ENCODE measurements at regions of chr19 and their contacts with region 1.

Region 1: GRCh38 chr19:2578901-2579677 is 103.2 kb downstream of the GADD45B start:
- DNase-seq: peak; percentile 97
- H3K4me3 ChIP-seq: peak overlapping the region; percentile 23 to 46 (median 26)
- H3K27ac ChIP-seq: peak overlapping the region; percentile 93
- H3K4me1 ChIP-seq: peaks cover 22% of the 10 kb centered on the region
- H3K27me3 ChIP-seq: no peaks in the 10 kb centered on the region
- CTCF ChIP-seq: peak; percentile 93 to 97
- POLR2A ChIP-seq: no peak

Region 2: GRCh38 chr19:2113439-2114211 is 465.5 kb before region 1 on chr19:
- CTCF ChIA-PET with region 1: no interaction called
- POLR2A ChIA-PET with region 1: no interaction called
- dilution Hi-C with region 1: no loop called
- intact Hi-C with region 1: no loop called
- DNase-seq: no peak
- H3K4me3 ChIP-seq: no peak overlapping the region
- H3K27ac ChIP-seq: no peak overlapping the region
- H3K4me1 ChIP-seq: no peaks in the 10 kb centered on the region
- H3K27me3 ChIP-seq: no peaks in the 10 kb centered on the region
- CTCF ChIP-seq: no peak
- POLR2A ChIP-seq: no peak

Region 3: GRCh38 chr19:2494444-2495129 is 84.5 kb before region 1 on chr19:
- CTCF ChIA-PET with region 1: interaction called, 5 read pairs
- POLR2A ChIA-PET with region 1: no interaction called
- dilution Hi-C with region 1: no loop called
- intact Hi-C with region 1: loop called (anchors 1 kb)
- DNase-seq: peak; percentile 57
- H3K4me3 ChIP-seq: peak overlapping the region; percentile 41 to 60 (median 50)
- H3K27ac ChIP-seq: peak overlapping the region; percentile 88
- H3K4me1 ChIP-seq: peaks cover 22% of the 10 kb centered on the region
- H3K27me3 ChIP-seq: no peaks in the 10 kb centered on the region
- CTCF ChIP-seq: no peak
- POLR2A ChIP-seq: no peak

Region 4: DNA sequence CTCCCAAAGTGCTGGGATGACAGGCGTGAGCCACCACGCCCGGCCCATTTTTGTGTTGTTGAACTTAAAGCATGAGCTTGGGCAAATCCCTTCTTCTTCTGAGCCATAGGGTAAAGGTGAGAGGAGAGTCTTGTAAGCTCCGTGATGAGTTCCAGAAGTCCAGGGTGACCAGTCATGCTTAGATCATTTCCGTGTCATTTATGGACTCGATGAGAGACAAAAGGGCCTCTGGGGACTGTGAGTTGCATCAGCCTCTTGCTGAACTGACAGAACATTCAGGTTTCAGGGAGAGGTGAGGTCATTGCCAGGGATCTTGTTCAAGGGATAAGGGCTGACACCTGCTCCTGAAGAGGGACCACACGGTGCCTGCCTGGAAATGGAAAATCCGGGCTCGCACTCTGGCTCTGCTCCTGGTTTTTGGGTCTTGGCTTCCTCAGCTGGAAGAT is 49.6 kb before region 1 on chr19:
- CTCF ChIA-PET with region 1: interaction called, 15 read pairs
- POLR2A ChIA-PET with region 1: interaction called, 4 read pairs
- dilution Hi-C with region 1: no loop called
- intact Hi-C with region 1: loop called (anchors 1 kb)
- DNase-seq: peak; percentile 75
- H3K4me3 ChIP-seq: no peak overlapping the region
- H3K27ac ChIP-seq: peak overlapping the region; percentile 75
- H3K4me1 ChIP-seq: peaks cover 36% of the 10 kb centered on the region
- H3K27me3 ChIP-seq: no peaks in the 10 kb centered on the region
- CTCF ChIP-seq: no peak
- POLR2A ChIP-seq: no peak

Region 5: DNA sequence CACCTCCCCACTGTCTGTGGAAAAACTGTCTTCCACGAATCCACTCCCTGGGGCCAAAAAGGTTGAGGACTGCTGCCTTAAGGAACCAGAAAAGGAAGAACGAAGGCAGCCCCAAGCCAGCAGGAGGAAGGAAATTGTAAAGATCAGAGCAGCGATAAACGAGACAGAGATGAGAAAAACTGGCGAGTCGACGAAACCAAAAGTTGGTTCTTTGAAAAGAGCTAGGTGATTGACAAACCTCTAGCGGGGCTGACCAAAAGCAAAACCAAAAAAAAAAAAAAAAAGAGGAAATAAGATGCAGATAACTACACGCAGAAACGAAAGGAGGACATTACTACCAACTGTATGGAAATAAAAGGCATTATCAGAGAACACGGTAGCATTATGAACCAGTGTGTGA is 26.2 kb before region 1 on chr19:
- CTCF ChIA-PET with region 1: interaction called, 29 read pairs
- POLR2A ChIA-PET with region 1: no interaction called
- dilution Hi-C with region 1: no loop called
- intact Hi-C with region 1: loop called (anchors 1 kb)
- DNase-seq: peak; percentile 56
- H3K4me3 ChIP-seq: peak overlapping the region; percentile 20 to 73 (median 24)
- H3K27ac ChIP-seq: peak overlapping the region; percentile 72
- H3K4me1 ChIP-seq: peaks cover 22% of the 10 kb centered on the region
- H3K27me3 ChIP-seq: no peaks in the 10 kb centered on the region
- CTCF ChIP-seq: no peak
- POLR2A ChIP-seq: no peak

Region 6: GRCh38 chr19:2610637-2611482 is 31.8 kb after region 1 on chr19:
- CTCF ChIA-PET with region 1: interaction called, 73 read pairs
- POLR2A ChIA-PET with region 1: interaction called, 6 read pairs
- dilution Hi-C with region 1: no loop called
- intact Hi-C with region 1: loop called (anchors 1 kb)
- DNase-seq: peak; percentile 85
- H3K4me3 ChIP-seq: peak overlapping the region in 1 of 3 experiments; percentile 9
- H3K27ac ChIP-seq: peak overlapping the region; percentile 62
- H3K4me1 ChIP-seq: peaks cover under 1% of the 10 kb centered on the region
- H3K27me3 ChIP-seq: no peaks in the 10 kb centered on the region
- CTCF ChIP-seq: peak; percentile 96 to 98
- POLR2A ChIP-seq: no peak

Region 7: DNA sequence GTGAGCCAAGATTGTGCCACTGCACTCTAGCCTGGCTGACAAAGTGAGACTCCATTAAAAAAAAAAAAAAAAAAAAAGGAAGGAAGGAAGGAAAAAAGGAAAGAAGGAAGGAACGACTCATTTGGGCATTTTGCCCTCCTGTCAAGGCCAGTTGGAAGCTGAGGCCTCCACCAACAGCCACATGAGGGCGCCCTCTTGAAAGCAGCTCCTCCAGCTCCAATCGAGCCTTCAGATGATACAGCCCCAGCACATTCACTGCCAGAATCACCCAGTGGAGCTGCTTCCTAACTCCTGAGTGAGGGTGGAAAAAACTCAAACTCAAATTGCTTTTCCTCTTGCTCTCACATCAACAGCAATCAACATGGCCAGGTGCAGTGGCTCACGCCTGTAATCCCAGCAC is 82.5 kb after region 1 on chr19:
- CTCF ChIA-PET with region 1: no interaction called
- POLR2A ChIA-PET with region 1: no interaction called
- dilution Hi-C with region 1: no loop called
- intact Hi-C with region 1: no loop called
- DNase-seq: no peak
- H3K4me3 ChIP-seq: no peak overlapping the region
- H3K27ac ChIP-seq: no peak overlapping the region
- H3K4me1 ChIP-seq: no peaks in the 10 kb centered on the region
- H3K27me3 ChIP-seq: peaks cover 0 to 2% of the 10 kb centered on the region in 2 experiments
- CTCF ChIP-seq: peak in 1 of 2 donors; percentile 9
- POLR2A ChIP-seq: no peak